Activated T-helper 1 cell treated with anti-CD3 and anti-CD28 coated beads, Interleukin-12 subunit alpha, Interleukin-12 subunit beta, Interleukin-2, Interleukin-4 antibody, amounts not matched to agents 30 ng/mL and 10 ng/mL and 1 ng/mL, durations not matched to agents 14 hours and 24 hours and 36 hours (primary cell): ENCODE measurements at regions of chr4 and their contacts with region 1.

Region 1: GRCh38 chr4:70183168-70183939 is 12.2 kb upstream of the ODAM start:
- DNase-seq: peak; percentile 0
- H3K4me3 Mint-ChIP-seq: no peak overlapping the region
- H3K27ac Mint-ChIP-seq: no peak overlapping the region
- H3K4me1 Mint-ChIP-seq: no peaks in the 10 kb centered on the region
- H3K27me3 Mint-ChIP-seq: no peaks in the 10 kb centered on the region

Region 2: GRCh38 chr4:69322055-69322454 is 861.3 kb before region 1 on chr4:
- intact Hi-C with region 1: loop called (anchors 10 kb)
- DNase-seq: no peak
- H3K4me3 Mint-ChIP-seq: no peak overlapping the region
- H3K27ac Mint-ChIP-seq: no peak overlapping the region
- H3K4me1 Mint-ChIP-seq: no peaks in the 10 kb centered on the region
- H3K27me3 Mint-ChIP-seq: no peaks in the 10 kb centered on the region

Region 3: DNA sequence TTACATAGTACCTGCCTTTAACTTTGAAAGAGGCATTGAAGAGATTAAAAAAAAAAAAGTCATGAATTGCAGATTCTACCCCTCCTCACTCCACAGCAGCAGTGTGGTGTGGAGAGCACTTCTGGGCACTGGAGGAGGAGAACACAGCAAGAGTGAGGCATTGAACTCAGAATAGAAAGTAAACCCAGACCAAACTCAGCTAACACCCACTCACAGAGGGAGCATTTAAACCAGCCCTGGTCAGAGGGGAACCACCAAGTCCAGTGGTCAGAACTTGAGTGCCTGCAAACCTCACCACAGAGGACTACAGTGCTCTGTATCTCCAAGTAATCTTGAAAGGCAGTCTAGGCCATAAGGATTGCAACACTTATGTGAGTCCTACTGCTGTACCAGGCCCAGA is 514.7 kb before region 1 on chr4:
- intact Hi-C with region 1: no loop called
- DNase-seq: no peak
- H3K4me3 Mint-ChIP-seq: no peak overlapping the region
- H3K27ac Mint-ChIP-seq: no peak overlapping the region
- H3K4me1 Mint-ChIP-seq: no peaks in the 10 kb centered on the region
- H3K27me3 Mint-ChIP-seq: peaks cover 8% of the 10 kb centered on the region